Uterus (tissue), 4 donors: ENCODE measurements at regions of chr1 and their contacts with region 1.

Region 1: DNA sequence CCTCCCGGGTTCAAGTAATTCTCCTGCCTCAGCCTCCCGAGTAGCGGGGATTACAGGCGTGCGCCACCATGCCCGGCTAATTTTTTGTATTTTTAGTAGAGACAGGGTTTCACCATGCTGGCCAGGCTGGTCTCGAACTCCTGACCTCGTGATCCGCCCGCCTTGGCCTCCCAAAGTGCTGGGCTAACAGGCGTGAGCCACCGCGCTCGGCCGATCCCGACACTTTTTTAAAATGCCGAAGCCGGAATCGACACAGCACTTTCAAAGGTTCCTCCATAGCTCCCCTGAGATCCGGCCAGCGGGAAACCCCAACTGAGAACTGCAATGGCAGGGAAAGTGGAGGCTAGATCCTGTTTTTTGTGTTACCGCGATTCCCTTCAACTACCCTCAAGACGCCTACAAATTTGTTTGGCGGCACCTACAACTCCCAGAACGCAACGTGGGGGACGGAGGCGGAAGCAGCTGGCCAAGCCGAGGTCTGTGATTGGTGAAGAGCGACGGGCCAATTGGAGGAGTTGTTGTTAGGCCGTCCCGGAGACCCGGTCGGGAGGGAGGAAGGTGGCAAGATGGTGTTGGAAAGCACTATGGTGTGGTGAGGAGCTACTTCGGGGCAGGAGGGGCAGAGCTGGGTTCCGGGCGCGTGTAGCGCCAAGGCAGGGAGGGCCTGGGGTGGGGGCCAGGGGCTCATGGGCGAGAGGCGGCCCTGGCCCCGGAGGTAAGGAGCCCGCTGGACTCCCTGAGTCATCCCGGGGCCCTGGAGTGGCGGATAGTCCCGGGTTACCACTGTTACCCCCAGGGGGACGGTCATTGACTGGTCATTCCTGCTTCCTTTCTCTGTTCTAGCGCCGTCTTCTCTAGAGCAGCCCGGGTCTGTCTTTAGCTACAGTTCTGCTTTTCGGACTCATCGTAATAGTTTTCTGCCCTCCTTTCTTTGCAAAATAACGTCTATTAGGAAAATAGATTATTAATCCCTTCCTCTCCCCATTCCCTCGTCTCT is at the start of gene PSMD4:
- DNase-seq: peak; percentile 95 to 96
- H3K4me3 ChIP-seq: peak within 1 kb of the TSS; percentile 80 to 87
- H3K27ac ChIP-seq: peak within 1 kb of the TSS; percentile 86 to 90
- H3K4me1 ChIP-seq: peaks cover 0 to 3% of the 10 kb centered on the region in 2 donors
- H3K27me3 ChIP-seq: no peaks in the 10 kb centered on the region
- CTCF ChIP-seq: peak in 1 of 4 experiments; percentile 15
- POLR2A ChIP-seq: peak; percentile 74 to 79
- total RNA-seq, gene PSMD4: 73.5 to 114 (median 89.1) TPM

Region 2: GRCh38 chr1:151198255-151199127 is 56.0 kb before region 1 on chr1 and contains the start of gene PIP5K1A:
- intact Hi-C with region 1: loop called (anchors 10 kb)
- DNase-seq: peak; percentile 97 to 99
- H3K4me3 ChIP-seq: peak within 1 kb of the TSS; percentile 69 to 75
- H3K27ac ChIP-seq: peak within 1 kb of the TSS; percentile 88 to 92
- H3K4me1 ChIP-seq: peaks cover 0 to 9% of the 10 kb centered on the region in 2 donors
- H3K27me3 ChIP-seq: no peaks in the 10 kb centered on the region
- CTCF ChIP-seq: peak in 1 of 4 experiments; percentile 18
- POLR2A ChIP-seq: peak; percentile 74 to 77
- total RNA-seq, gene PIP5K1A: 66.8 to 240 (median 92.6) TPM

Region 3: GRCh38 chr1:151327223-151327902 is 72.8 kb after region 1 on chr1 and contains the start of gene PI4KB:
- intact Hi-C with region 1: no loop called
- DNase-seq: peak; percentile 92 to 97
- H3K4me3 ChIP-seq: peak within 1 kb of the TSS; percentile 61 to 62
- H3K27ac ChIP-seq: peak within 1 kb of the TSS; percentile 91 to 94
- H3K4me1 ChIP-seq: peaks cover 0 to 4% of the 10 kb centered on the region in 2 donors
- H3K27me3 ChIP-seq: no peaks in the 10 kb centered on the region
- CTCF ChIP-seq: peak in 3 of 4 experiments; percentile 7 to 18 (median 12)
- POLR2A ChIP-seq: peak; percentile 46 to 79
- total RNA-seq, gene PI4KB: 15.9 to 155 (median 44.1) TPM